ENCODE measurements at regions of chr4 and their contacts with region 1.

Region 1: GRCh38 chr4:163554870-163555465 is 60.5 kb downstream of the TMA16 start:
- DNase-seq: peak in 5 of 9 donors; percentile 21 to 43 (median 32)
- ATAC-seq: no peak
- H3K4me3 ChIP-seq: no peak overlapping the region
- H3K4me3 Mint-ChIP-seq: no peak overlapping the region
- H3K27ac ChIP-seq: no peak overlapping the region
- H3K27ac Mint-ChIP-seq: no peak overlapping the region
- H3K4me1 ChIP-seq: peaks cover 18 to 20% of the 10 kb centered on the region in 2 donors
- H3K4me1 Mint-ChIP-seq: peaks cover 18 to 52% (median 32%) of the 10 kb centered on the region in 7 donors
- H3K27me3 ChIP-seq: no peaks in the 10 kb centered on the region
- H3K27me3 Mint-ChIP-seq: peaks cover 0 to 5% (median 0%) of the 10 kb centered on the region in 5 donors

Region 2: DNA sequence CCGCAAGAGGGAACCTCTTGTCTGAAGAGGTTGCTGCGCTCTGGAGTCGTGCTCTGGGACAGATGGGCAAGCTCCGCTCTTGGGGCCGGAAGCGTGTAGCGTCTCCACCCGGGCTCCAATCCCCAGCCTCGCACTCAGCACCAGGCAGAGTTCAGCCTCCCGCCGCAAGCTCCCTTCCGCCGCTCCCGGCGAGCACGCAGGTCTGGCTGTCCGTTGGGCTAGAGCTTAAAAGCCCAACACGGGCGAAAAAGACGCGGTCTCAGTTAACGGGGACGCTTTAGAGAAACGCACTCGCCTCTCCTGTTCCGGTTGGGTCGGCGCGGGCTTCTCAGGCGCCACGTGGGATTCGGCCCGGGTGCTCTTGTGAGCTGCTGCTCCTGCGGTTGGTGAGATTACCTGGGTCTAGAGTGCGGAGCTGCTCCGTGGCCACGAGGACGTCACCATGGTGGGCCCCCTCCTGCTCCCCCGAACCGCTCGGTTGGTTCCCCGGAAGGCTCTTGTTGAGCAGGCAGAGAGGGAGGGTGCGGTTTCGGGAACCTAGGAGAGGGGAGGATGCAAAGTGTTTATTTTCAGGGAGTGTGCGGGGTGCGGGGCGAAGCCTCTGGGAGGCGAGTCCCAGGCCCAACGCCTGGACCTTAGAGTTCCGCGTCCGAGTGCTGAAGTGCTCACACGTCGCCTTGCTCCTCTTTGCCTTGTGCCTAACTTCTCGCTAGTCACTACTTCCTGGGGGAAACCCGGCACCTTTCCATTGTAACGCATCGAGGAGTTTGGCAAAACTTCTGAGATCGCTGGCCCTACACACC is 60.4 kb before region 1 on chr4 and contains the start of gene TMA16:
- CTCF ChIA-PET with region 1: interaction called, 6 read pairs
- POLR2A ChIA-PET with region 1: interaction called, 5 read pairs
- intact Hi-C with region 1: loop called in 1 of 2 experiments (anchors 1 kb)
- DNase-seq: peak; percentile 56 to 87 (median 76)
- ATAC-seq: peak; percentile 89
- H3K4me3 ChIP-seq: peak within 1 kb of the TSS; percentile 94
- H3K4me3 Mint-ChIP-seq: peak within 1 kb of the TSS; percentile 92 to 100 (median 98)
- H3K27ac ChIP-seq: peak within 1 kb of the TSS; percentile 83
- H3K27ac Mint-ChIP-seq: peak within 1 kb of the TSS; percentile 78 to 99 (median 96)
- H3K4me1 ChIP-seq: peaks cover 7% of the 10 kb centered on the region in 2 donors
- H3K4me1 Mint-ChIP-seq: peaks cover 20 to 44% (median 36%) of the 10 kb centered on the region in 7 donors
- H3K27me3 ChIP-seq: no peaks in the 10 kb centered on the region
- H3K27me3 Mint-ChIP-seq: peaks cover 0 to 12% (median 5%) of the 10 kb centered on the region in 5 donors
- total RNA-seq, gene TMA16: 10.5 to 38.7 (median 20.7) TPM

Region 3: DNA sequence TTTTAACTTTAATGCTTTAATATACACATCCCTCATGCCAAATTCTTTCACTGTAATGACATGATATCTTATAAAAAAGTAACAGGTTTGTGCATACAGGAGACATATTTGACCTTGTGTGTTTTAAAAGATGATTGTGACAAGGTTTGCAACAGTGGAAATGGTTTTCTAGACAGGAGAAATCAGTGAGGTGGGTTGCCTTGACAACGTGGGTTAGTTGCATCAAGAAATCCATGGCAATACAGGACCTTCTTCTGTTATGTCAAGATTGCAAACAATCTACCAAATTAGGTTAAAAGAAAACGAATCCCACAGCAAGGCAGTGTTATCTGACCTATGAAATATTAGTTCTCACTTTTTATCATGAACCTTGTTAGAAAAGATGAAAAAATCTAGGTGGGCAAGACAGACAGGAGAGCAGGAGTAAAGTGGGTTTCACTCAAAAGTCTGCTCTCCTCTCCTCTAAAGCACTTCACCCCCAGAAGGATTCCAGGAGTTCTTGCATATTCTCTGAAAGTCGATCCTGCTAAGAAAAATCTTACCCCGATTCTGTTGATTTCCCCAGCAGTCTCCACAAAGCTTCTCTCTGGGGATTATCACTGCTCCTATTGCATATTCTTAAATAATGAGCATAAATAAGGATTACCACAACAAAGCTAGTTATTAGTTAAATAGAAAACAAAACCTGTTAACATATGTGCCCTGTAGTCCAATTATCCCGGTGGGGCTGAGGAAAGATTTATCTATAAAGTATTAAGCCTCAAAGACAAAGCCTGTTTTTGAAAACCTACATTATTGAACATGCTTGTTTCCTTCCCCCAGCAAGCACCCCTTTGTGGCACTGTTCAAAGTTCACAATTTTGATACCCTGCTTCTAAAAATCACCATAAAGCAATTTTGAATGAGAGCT is 10.5 kb after region 1 on chr4:
- CTCF ChIA-PET with region 1: interaction called, 3 read pairs
- POLR2A ChIA-PET with region 1: interaction called, 3 read pairs
- intact Hi-C with region 1: loop called in 1 of 2 experiments (anchors 1 kb)
- DNase-seq: no peak
- ATAC-seq: no peak
- H3K4me3 ChIP-seq: no peak overlapping the region
- H3K4me3 Mint-ChIP-seq: no peak overlapping the region
- H3K27ac ChIP-seq: no peak overlapping the region
- H3K27ac Mint-ChIP-seq: peak overlapping the region in 3 of 9 donors; percentile 17 to 56 (median 52)
- H3K4me1 ChIP-seq: no peaks in the 10 kb centered on the region
- H3K4me1 Mint-ChIP-seq: peaks cover 0 to 23% (median 7%) of the 10 kb centered on the region in 7 donors
- H3K27me3 ChIP-seq: no peaks in the 10 kb centered on the region
- H3K27me3 Mint-ChIP-seq: no peaks in the 10 kb centered on the region

Region 4: DNA sequence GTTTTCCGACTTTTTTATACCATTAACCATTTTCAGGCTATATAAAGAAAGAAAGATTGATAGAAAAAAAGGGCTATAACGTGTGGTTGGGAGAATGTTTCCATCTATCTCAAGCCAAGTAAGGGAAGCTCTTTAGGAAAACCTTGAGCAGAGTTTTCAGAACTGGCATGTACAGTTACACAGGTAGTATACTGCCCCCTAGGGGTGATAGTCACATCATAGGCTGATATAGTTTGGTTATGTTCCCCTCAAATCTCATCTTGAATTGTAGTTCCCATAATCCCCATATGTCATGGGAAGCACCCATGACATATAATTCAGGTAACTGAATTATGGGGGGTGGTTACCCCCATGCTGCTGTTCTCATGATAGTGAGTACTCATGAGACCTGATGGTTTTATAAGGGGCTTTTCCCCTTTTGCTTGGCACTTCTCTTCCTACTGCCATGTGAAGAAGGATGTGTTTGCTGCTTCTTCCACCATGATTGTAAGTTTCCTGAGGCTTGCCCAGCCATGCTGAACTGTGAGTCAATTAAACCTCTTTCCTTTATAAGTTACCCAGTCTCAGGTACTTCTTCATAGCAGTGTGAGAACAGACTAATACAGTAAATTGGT is 126.3 kb after region 1 on chr4:
- CTCF ChIA-PET with region 1: interaction called, 181 read pairs
- POLR2A ChIA-PET with region 1: interaction called, 5 read pairs
- intact Hi-C with region 1: loop called (anchors 1 kb)
- DNase-seq: peak in 7 of 9 donors; percentile 53 to 72 (median 69)
- ATAC-seq: peak; percentile 92
- H3K4me3 ChIP-seq: no peak overlapping the region
- H3K4me3 Mint-ChIP-seq: no peak overlapping the region
- H3K27ac ChIP-seq: no peak overlapping the region
- H3K27ac Mint-ChIP-seq: no peak overlapping the region
- H3K4me1 ChIP-seq: peaks cover 0 to 4% of the 10 kb centered on the region in 2 donors
- H3K4me1 Mint-ChIP-seq: peaks cover 0 to 31% (median 10%) of the 10 kb centered on the region in 7 donors
- H3K27me3 ChIP-seq: no peaks in the 10 kb centered on the region
- H3K27me3 Mint-ChIP-seq: peaks cover 0 to 4% (median 0%) of the 10 kb centered on the region in 5 donors

Region 5: DNA sequence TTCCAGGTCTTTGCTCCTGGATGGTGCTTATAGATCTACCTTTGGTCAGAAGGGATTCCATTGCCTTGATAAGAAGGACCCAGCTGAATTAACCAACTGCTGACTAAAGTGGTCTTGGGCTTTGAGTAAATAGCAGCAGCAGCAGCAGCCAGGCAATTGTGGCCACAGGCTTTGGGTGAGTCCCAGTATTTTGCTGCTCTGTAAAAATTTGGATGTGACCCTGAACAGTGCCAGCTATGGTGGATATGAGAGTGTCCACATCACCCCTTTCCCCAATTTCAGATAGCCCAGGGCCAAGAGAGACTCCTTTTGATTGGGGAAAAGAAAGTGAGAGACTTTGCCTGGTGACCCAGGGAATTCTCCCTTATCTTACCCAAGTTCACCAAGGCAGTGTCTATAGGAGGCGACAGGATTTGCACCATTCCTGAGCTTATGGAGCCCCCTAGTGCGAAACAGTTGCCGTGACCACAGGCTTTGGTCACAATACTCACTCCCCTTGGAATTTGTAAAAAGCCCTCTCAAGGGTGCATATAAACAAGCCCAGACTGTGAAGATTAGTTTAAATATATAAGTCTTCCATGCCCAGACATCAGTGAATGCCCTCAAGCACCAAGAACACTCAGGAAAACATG is 457.5 kb after region 1 on chr4:
- CTCF ChIA-PET with region 1: interaction called, 19 read pairs
- POLR2A ChIA-PET with region 1: no interaction called
- intact Hi-C with region 1: loop called (anchors 1 to 2 kb)
- DNase-seq: peak in 4 of 9 donors; percentile 10 to 37 (median 26)
- ATAC-seq: peak; percentile 29
- H3K4me3 ChIP-seq: no peak overlapping the region
- H3K4me3 Mint-ChIP-seq: peak overlapping the region in 1 of 10 donors; percentile 1
- H3K27ac ChIP-seq: no peak overlapping the region
- H3K27ac Mint-ChIP-seq: no peak overlapping the region
- H3K4me1 ChIP-seq: peaks cover 0 to 6% of the 10 kb centered on the region in 2 donors
- H3K4me1 Mint-ChIP-seq: peaks cover 0 to 32% (median 18%) of the 10 kb centered on the region in 7 donors
- H3K27me3 ChIP-seq: no peaks in the 10 kb centered on the region
- H3K27me3 Mint-ChIP-seq: no peaks in the 10 kb centered on the region

Region 6: DNA sequence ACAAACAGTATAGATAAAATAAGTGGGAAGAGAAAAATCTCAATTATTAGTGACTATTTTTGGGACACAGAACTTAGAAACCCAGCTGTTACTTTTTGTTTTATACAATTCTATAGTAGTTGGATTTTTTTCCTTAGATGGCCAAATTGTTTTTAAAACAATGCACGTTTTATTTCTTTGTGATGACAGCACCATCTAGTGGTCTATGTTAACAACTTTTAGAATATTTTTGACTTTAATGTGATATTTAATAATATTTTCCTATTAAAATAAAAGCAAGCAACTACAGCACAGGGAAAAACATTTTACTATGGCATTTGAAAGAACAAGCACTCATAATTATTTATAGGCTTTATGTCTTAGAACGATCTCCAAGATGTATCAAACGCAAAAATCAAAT is 1193.4 kb after region 1 on chr4:
- CTCF ChIA-PET with region 1: no interaction called
- POLR2A ChIA-PET with region 1: no interaction called
- intact Hi-C with region 1: loop called (anchors 1 to 2 kb)
- DNase-seq: peak in 1 of 9 donors; percentile 8
- ATAC-seq: no peak
- H3K4me3 ChIP-seq: no peak overlapping the region
- H3K4me3 Mint-ChIP-seq: no peak overlapping the region
- H3K27ac ChIP-seq: no peak overlapping the region
- H3K27ac Mint-ChIP-seq: no peak overlapping the region
- H3K4me1 ChIP-seq: no peaks in the 10 kb centered on the region
- H3K4me1 Mint-ChIP-seq: no peaks in the 10 kb centered on the region
- H3K27me3 ChIP-seq: no peaks in the 10 kb centered on the region
- H3K27me3 Mint-ChIP-seq: peaks cover 0 to 23% (median 9%) of the 10 kb centered on the region in 5 donors

Region 7: GRCh38 chr4:165112368-165113139 is 1557.6 kb after region 1 on chr4 and contains the start of gene TMEM192:
- CTCF ChIA-PET with region 1: no interaction called
- POLR2A ChIA-PET with region 1: no interaction called
- intact Hi-C with region 1: loop called (anchors 5 to 10 kb)
- DNase-seq: peak; percentile 84 to 97 (median 91)
- ATAC-seq: peak; percentile 99
- H3K4me3 ChIP-seq: peak within 1 kb of the TSS; percentile 88
- H3K4me3 Mint-ChIP-seq: peak within 1 kb of the TSS; percentile 90 to 99 (median 94)
- H3K27ac ChIP-seq: peak within 1 kb of the TSS; percentile 75
- H3K27ac Mint-ChIP-seq: peak within 1 kb of the TSS; percentile 75 to 96 (median 94)
- H3K4me1 ChIP-seq: peaks cover 0 to 7% of the 10 kb centered on the region in 2 donors
- H3K4me1 Mint-ChIP-seq: peaks cover 13 to 37% (median 18%) of the 10 kb centered on the region in 7 donors
- H3K27me3 ChIP-seq: no peaks in the 10 kb centered on the region
- H3K27me3 Mint-ChIP-seq: peaks cover 0 to 23% (median 0%) of the 10 kb centered on the region in 5 donors
- total RNA-seq, gene TMEM192: 5.3 to 13.9 (median 9.6) TPM